B cell (primary cell): ENCODE measurements at regions of chr6 and their contacts with region 1.

Region 1: DNA sequence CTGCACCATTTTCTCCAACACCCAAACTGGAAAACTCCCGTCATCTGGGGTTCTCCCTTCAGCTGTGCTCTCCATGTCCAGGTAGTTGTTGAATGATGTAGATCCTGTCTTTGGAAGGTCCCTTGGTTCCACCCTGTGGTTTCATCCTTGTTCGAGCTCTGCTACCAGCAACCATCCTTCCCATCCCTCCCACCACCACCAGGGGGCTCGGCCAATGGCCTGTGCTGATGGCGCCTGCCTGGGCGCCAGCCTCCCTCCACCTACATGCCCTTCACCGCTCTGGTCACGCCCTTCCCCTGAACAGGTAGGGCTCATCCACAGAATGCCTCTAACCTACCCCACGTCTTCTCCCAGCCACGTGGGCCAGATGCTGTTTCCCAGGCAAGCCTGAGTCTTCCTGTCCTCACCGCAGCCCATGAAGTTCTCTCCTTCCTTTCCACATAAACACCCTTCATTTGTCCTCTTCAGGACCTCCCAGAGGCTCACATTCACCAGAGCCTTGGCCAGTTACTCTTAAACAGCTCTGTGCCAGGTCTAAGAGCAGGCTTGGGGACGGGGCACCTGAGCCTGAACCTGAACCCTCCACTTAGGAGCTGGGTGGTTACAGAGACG is 75.1 kb upstream of the DUSP22 start:
- DNase-seq: peak; percentile 49
- ATAC-seq: no peak
- H3K4me3 ChIP-seq: no peak overlapping the region
- H3K4me3 Mint-ChIP-seq: peak overlapping the region; percentile 58
- H3K27ac ChIP-seq: no peak overlapping the region
- H3K27ac Mint-ChIP-seq: peak overlapping the region; percentile 44
- H3K4me1 ChIP-seq: peaks cover 43 to 62% of the 10 kb centered on the region in 2 donors
- H3K4me1 Mint-ChIP-seq: peaks cover 69% of the 10 kb centered on the region
- H3K27me3 ChIP-seq: peaks cover 0 to 2% (median 0%) of the 10 kb centered on the region in 4 experiments
- H3K27me3 Mint-ChIP-seq: no peaks in the 10 kb centered on the region
- CTCF ChIP-seq: peak; percentile 50

Region 2: DNA sequence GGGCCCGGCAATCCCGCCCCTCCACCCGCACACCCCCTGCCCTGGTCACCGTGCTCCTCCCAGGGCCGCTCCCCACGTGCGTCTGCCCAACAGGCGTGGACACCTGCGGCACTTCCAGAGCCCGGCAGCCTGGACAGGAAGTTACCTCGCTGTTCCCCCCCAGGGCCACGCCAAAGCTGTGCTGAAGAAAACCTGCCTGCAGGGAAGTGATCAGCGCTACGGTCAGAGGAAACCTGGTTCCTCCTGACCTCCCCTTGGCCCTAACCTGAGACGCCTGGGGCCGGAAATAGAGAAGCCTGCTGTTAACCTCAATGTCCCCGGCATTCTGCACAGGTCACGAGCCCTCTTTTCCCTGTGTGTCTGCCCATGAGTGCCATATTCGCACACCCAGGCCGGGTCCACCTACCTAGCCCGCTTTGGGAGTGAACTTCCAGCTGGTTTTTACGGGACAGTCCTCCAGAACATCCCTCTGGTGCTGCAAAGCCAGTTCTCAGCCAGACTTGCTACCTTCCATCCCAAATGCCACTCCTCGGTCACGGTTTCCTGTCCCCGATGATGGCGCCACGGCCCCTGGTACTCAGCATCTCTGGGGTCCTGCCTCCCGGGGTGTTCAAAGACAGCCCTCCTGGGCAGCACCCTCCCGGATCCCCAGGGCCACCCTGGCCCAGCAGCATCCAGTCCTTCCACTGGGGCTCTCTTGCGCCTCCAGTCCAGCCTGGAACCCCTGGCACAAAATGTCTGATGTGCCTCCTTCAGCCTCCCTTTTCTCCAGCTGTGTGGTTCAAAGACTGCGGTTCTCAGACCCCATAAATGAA is 162.4 kb after region 1 on chr6:
- CTCF ChIA-PET with region 1: interaction called, 3 read pairs
- POLR2A ChIA-PET with region 1: interaction called, 12 read pairs
- intact Hi-C with region 1: no loop called
- DNase-seq: peak; percentile 57
- ATAC-seq: peak; percentile 37
- H3K4me3 ChIP-seq: no peak overlapping the region
- H3K4me3 Mint-ChIP-seq: peak overlapping the region; percentile 26
- H3K27ac ChIP-seq: no peak overlapping the region
- H3K27ac Mint-ChIP-seq: peak overlapping the region; percentile 56
- H3K4me1 ChIP-seq: peaks cover 44 to 46% of the 10 kb centered on the region in 2 donors
- H3K4me1 Mint-ChIP-seq: peaks cover 42% of the 10 kb centered on the region
- H3K27me3 ChIP-seq: no peaks in the 10 kb centered on the region
- H3K27me3 Mint-ChIP-seq: no peaks in the 10 kb centered on the region
- CTCF ChIP-seq: no peak